Colonic mucosa (tissue), 4 donors: ENCODE measurements at regions of chr11 and their contacts with region 1.

Region 1: GRCh38 chr11:69044111-69045013 is 4.4 kb upstream of the TPCN2 start:
- DNase-seq: peak; percentile 72
- H3K4me3 ChIP-seq: no peak overlapping the region
- H3K27ac ChIP-seq: peak overlapping the region; percentile 4
- H3K4me1 ChIP-seq: no peaks in the 10 kb centered on the region
- H3K27me3 ChIP-seq: no peaks in the 10 kb centered on the region
- CTCF ChIP-seq: peak; percentile 55

Region 2: DNA sequence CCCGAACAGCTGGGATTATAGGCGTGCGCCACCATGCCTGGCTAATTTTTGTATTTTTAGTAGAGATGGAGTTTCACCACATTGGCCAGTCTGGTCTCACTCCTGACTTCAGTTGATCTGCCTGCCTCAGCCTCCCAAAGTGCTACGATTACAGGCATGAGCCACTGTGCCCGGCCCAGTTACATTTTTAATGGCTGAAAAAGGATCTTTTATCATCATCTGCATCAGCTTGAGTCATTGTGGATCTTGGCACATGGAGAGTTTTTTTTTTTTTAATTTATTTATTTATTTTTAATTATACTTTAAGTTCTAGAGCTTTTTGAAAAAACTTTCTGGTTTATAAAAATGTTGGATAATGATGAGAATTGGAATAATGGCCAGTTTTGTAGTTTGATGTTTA is 132.1 kb before region 1 on chr11:
- intact Hi-C with region 1: loop called (anchors 5 kb)
- DNase-seq: no peak
- H3K4me3 ChIP-seq: no peak overlapping the region
- H3K27ac ChIP-seq: no peak overlapping the region
- H3K4me1 ChIP-seq: no peaks in the 10 kb centered on the region
- H3K27me3 ChIP-seq: no peaks in the 10 kb centered on the region
- CTCF ChIP-seq: no peak

Region 3: GRCh38 chr11:69200331-69201065 is 156.1 kb after region 1 on chr11:
- intact Hi-C with region 1: no loop called
- DNase-seq: no peak
- H3K4me3 ChIP-seq: no peak overlapping the region
- H3K27ac ChIP-seq: no peak overlapping the region
- H3K4me1 ChIP-seq: no peaks in the 10 kb centered on the region
- H3K27me3 ChIP-seq: no peaks in the 10 kb centered on the region
- CTCF ChIP-seq: no peak